ENCODE measurements at regions of chrX and their contacts with region 1.

Region 1: GRCh38 chrX:101799387-101799786 is 132.4 kb downstream of the ZMAT1 start:
- DNase-seq: peak; percentile 86 to 95
- H3K4me3 ChIP-seq: peak overlapping the region in 3 of 4 donors; percentile 11 to 21 (median 17)
- H3K27ac ChIP-seq: no peak overlapping the region
- H3K4me1 ChIP-seq: no peaks in the 10 kb centered on the region
- H3K27me3 ChIP-seq: no peaks in the 10 kb centered on the region
- CTCF ChIP-seq: peak in 5 of 7 experiments; percentile 51 to 91 (median 74)
- EP300 ChIP-seq: no peak
- POLR2A ChIP-seq: no peak

Region 2: DNA sequence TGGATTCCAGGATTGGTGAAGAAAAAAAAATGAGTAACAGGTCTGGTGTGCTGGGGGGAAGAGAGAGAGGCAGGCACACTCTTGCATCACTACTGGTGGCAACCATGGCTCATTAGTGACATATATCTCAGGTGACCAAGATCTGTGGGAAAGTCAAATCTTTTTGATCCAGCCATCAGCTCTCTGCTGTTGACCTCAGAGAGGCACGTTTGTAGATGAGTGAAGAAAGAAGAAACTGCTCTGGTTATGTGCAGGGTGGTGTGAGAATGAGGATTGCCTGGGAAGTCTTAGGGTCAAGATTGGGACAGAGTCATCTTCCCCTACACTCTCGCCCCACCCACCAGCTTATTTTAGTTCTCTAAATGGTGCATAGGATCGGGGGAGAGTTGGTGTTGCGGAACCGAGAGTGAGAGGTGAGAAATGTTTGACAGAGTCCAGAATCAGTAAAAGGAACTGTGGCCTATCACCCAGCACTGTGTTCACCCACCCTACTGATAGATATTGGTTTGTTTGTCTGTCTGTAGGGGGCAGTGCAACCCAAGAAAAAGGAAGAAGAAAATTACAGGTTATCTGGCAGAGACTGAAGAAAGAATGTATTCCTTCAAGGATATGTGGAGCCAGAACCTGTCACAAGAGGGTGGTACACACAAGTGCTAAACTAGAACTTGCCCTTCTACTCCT is 203.5 kb before region 1 on chrX:
- intact Hi-C with region 1: loop called (anchors 10 kb)
- DNase-seq: peak in 1 of 2 donors; percentile 85
- H3K4me3 ChIP-seq: no peak overlapping the region
- H3K27ac ChIP-seq: no peak overlapping the region
- H3K4me1 ChIP-seq: no peaks in the 10 kb centered on the region
- H3K27me3 ChIP-seq: peaks cover 0 to 12% (median 0%) of the 10 kb centered on the region in 3 donors
- CTCF ChIP-seq: peak in 5 of 7 experiments; percentile 27 to 65 (median 53)
- EP300 ChIP-seq: no peak
- POLR2A ChIP-seq: no peak

Measured in stomach (tissue), 19 donors.